ENCODE measurements at regions of chr3 and their contacts with region 1.

Region 1: DNA sequence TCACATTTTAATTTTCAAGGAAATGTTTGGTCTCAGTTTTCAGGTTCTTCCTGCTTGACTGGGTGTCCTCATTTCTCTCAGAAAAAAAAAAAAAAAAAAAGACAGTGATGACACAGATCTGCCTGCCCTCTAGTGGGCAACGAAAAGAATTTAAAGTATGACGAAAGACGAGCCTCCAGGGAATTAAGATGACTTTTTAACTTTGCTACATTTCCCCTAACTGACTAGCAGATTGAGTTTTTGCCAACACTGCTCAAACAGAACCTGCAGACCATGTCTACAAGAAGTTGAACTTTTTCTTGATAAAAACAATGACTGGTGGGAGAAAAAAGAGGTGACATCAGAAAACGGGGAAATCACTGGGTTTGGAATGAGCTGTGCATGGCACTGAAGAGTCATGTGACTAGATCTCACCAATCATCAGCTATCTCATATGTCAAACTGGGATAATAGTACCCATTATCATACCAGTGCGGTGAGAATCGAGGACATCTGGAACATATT is 40.8 kb downstream of the EOMES start:
- DNase-seq: peak; percentile 79 to 87 (median 86)
- H3K4me3 ChIP-seq: peak overlapping the region in 3 of 7 experiments; percentile 0 to 46 (median 8)
- H3K27ac ChIP-seq: no peak overlapping the region
- H3K4me1 ChIP-seq: peaks cover 0 to 4% (median 4%) of the 10 kb centered on the region in 4 experiments
- H3K27me3 ChIP-seq: no peaks in the 10 kb centered on the region

Region 2: DNA sequence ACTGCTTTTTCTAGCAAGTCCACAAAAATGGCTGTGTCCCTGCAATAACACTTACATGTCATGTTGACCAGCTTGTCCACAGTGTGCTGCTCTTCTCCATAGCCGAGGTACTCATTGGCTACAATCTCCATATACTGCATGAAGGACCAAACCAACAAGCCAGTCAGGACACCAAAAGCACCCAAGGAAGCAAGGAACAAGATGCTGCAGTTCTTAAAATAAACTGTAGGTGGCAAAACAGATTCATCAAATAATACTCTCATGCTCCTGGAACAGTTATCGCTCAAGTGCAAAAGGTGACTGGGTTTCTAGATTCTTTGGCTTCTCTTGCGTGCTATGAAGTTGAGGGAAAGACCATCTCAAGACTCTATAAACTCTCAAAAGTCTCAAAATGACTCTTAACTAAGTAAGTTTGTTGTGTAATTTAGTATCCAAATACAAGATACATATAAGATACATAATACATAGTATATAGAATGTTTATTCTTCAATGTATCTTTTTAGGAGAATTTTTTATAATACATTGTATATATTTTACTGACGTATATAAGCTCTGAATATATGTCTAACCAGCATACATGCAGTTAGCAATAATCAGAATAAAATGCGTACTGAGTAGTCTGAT is 369.1 kb before region 1 on chr3:
- CTCF ChIA-PET with region 1: interaction called, 13 read pairs
- POLR2A ChIA-PET with region 1: no interaction called
- DNase-seq: peak; percentile 63 to 79 (median 73)
- H3K4me3 ChIP-seq: no peak overlapping the region
- H3K27ac ChIP-seq: no peak overlapping the region
- H3K4me1 ChIP-seq: peaks cover 0 to 13% (median 0%) of the 10 kb centered on the region in 4 experiments
- H3K27me3 ChIP-seq: no peaks in the 10 kb centered on the region